ENCODE measurements at regions of chr4 and their contacts with region 1.

Region 1: GRCh38 chr4:2963175-2963965 is at the starts of genes GRK4 and NOP14:
- DNase-seq: peak; percentile 90 to 99 (median 92)
- ATAC-seq: peak; percentile 94
- H3K4me3 ChIP-seq: peak within 1 kb of the TSS; percentile 90
- H3K27ac ChIP-seq: peak within 1 kb of the TSS; percentile 91
- H3K4me1 ChIP-seq: peaks cover 20 to 24% of the 10 kb centered on the region in 2 experiments; a peak in 4 of 5 replicates
- H3K27me3 ChIP-seq: no peaks in the 10 kb centered on the region
- CTCF ChIP-seq: peak; percentile 39 to 52 (median 40)
- EP300 ChIP-seq: no peak
- POLR2A ChIP-seq: peak; percentile 88
- RAD21 ChIP-seq: peak; percentile 25 to 30
- polyA plus RNA-seq, gene GRK4: 1.1 to 1.2 TPM
- polyA plus RNA-seq, gene NOP14: 12.7 to 12.9 TPM

Region 2: DNA sequence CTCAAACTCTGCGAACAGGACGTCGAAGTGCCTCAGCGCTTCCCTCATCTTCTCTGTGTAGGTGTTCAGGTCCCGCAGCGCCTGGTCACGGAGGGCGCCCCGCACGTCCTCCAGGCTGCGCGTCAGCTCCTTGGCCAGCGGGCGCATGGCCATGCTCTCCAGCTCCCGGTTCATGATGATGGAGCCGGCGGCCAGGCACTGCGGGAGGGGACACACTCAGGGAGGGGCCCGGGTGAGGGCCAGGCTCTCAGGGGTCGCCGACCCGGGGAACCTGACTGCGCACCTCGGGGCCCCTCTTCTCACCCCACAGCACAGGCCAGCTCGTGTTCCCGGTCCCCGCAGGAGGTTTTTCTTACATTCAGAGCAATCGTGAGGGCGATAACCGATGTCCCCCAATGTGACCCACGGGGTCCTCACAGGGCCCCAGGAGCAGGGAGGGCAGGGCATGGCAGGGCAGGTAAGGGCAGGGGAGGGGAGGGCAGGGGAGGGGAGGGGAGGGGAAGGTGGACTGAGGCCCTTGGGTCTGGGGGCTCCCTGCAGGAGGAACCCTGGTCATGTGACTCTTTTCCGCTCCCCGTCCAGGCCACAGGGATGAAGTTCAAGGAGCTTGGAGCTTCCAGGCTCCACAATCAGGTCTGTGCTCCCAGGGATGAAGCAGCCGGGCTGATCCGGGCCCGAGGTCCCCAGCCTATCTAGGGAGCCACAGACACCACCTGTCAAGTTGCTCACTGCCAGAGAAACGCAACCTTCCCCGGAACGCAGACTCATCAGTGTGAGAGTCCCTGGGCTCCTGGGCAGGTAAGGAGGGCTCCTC is 623.7 kb before region 1 on chr4:
- CTCF ChIA-PET with region 1: no interaction called
- POLR2A ChIA-PET with region 1: no interaction called
- in situ Hi-C with region 1: no loop called
- intact Hi-C with region 1: no loop called
- DNase-seq: no peak
- ATAC-seq: no peak
- H3K4me3 ChIP-seq: no peak overlapping the region
- H3K27ac ChIP-seq: no peak overlapping the region
- H3K4me1 ChIP-seq: peaks cover 0 to 10% of the 10 kb centered on the region in 2 experiments; a peak in 2 of 5 replicates
- H3K27me3 ChIP-seq: no peaks in the 10 kb centered on the region
- CTCF ChIP-seq: no peak
- EP300 ChIP-seq: no peak
- POLR2A ChIP-seq: no peak
- RAD21 ChIP-seq: no peak

Region 3: GRCh38 chr4:2934813-2935761 is 28.3 kb before region 1 on chr4:
- CTCF ChIA-PET with region 1: no interaction called
- POLR2A ChIA-PET with region 1: interaction called, 30 read pairs
- in situ Hi-C with region 1: no loop called
- intact Hi-C with region 1: no loop called
- DNase-seq: peak in 2 of 4 experiments; percentile 93 to 96
- ATAC-seq: peak; percentile 85
- H3K4me3 ChIP-seq: peak overlapping the region; percentile 84
- H3K27ac ChIP-seq: peak overlapping the region; percentile 68
- H3K4me1 ChIP-seq: peaks cover 17 to 70% of the 10 kb centered on the region in 2 experiments; a peak in 4 of 5 replicates
- H3K27me3 ChIP-seq: no peaks in the 10 kb centered on the region
- CTCF ChIP-seq: peak in 1 of 3 experiments; percentile 1; a peak in 1 of 6 replicates
- EP300 ChIP-seq: no peak
- POLR2A ChIP-seq: peak; percentile 93
- RAD21 ChIP-seq: no peak

Region 4: DNA sequence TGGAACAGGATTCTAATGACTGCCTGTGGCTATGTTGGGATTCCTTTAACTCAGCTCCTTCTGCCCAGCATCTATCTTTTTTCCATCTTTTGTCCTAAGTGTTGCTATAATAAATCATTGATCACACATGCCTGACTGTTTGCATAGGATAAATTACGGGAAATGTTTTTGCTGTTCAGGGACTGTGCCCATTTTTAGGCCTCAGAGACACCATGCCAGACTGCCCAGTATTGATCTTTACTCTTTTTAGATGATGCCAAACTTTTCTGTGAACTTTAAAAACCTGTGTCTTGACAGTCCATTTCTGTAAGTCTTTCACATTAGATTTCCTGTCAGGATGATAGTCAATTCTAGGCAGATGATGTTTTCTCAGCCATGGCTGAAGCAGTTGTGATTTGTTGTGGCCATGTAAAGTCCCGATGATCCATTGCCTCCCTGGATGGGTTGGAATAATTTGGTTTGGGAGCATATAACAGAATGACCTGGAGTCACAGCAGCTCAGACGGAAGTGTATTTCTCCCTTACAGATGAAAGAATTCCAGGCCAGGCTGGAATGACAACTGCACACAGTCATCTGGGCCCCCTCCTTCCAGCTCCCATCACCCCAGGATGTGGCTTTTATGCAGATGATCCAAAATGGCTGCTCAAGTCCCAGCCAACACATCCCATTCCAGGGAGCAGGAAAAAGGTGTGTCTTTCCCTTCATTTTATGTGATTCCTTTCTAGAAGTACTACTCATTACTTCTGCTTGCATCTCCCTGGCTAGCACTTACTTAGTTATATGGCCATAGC is 107.5 kb after region 1 on chr4:
- CTCF ChIA-PET with region 1: no interaction called
- POLR2A ChIA-PET with region 1: no interaction called
- in situ Hi-C with region 1: no loop called
- intact Hi-C with region 1: no loop called
- DNase-seq: no peak
- ATAC-seq: no peak
- H3K4me3 ChIP-seq: no peak overlapping the region
- H3K27ac ChIP-seq: no peak overlapping the region
- H3K4me1 ChIP-seq: peaks cover 4 to 15% of the 10 kb centered on the region in 2 experiments
- H3K27me3 ChIP-seq: peaks cover 11 to 32% of the 10 kb centered on the region in 2 experiments
- CTCF ChIP-seq: no peak
- EP300 ChIP-seq: no peak
- POLR2A ChIP-seq: no peak
- RAD21 ChIP-seq: no peak

Region 5: DNA sequence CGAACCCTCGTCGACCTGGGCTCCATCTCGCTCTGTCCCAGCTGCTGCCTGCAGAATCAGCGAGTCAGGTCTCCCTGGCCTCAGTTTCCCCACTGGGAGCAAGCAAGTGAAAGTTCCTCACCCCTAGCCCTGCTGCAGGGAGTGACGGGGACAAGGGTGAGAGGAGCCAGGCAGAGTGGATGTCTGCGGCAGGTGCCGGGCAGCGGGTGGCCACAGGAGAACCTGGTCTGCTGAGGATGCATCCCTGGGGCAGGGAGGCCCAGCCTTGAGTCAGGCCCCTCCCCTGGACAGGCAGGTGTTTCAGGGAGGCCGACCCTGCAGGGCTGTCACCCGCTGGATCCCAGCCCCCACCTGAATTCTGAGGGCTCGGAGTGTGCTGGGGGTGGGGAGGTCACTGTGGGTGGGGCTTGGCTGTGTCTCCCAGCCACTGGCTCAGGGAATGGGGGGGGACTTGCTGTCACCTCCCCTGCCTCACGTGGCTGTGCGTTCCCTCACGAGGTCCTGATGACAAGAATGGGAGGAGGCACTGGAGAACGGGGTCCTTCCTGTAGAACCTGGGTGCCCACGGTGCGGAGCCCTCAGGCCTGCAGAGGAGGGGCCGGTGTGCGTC is 535.6 kb after region 1 on chr4:
- CTCF ChIA-PET with region 1: no interaction called
- POLR2A ChIA-PET with region 1: no interaction called
- in situ Hi-C with region 1: no loop called
- intact Hi-C with region 1: no loop called
- DNase-seq: peak in 2 of 4 experiments; percentile 71 to 72
- ATAC-seq: peak; percentile 11; the same call in 2 of the 3 replicates
- H3K4me3 ChIP-seq: no peak overlapping the region
- H3K27ac ChIP-seq: no peak overlapping the region
- H3K4me1 ChIP-seq: peaks cover 0 to 71% of the 10 kb centered on the region in 2 experiments; a peak in 2 of 5 replicates
- H3K27me3 ChIP-seq: peaks cover 3 to 27% of the 10 kb centered on the region in 2 experiments; a peak in 4 of 5 replicates
- CTCF ChIP-seq: no peak
- EP300 ChIP-seq: no peak
- POLR2A ChIP-seq: no peak
- RAD21 ChIP-seq: no peak